SK-N-SH (cell line): ENCODE measurements at regions of chr2 and their contacts with region 1.

Region 1: GRCh38 chr2:207473049-207473930 is 56.5 kb upstream of the CREB1 start:
- DNase-seq: peak; percentile 51
- H3K4me3 ChIP-seq: peak overlapping the region in 1 of 2 experiments; percentile 10; a peak in 1 of 4 replicates
- H3K27ac ChIP-seq: peak overlapping the region; percentile 50 to 93; a peak in 3 of 4 replicates
- H3K4me1 ChIP-seq: peaks cover 13 to 52% of the 10 kb centered on the region in 2 experiments; a peak in 3 of 4 replicates
- H3K27me3 ChIP-seq: no peaks in the 10 kb centered on the region
- CTCF ChIP-seq: peak; percentile 89
- EP300 ChIP-seq: peak in 1 of 2 experiments; percentile 73; a peak in 1 of 4 replicates
- RAD21 ChIP-seq: peak; percentile 100

Region 2: DNA sequence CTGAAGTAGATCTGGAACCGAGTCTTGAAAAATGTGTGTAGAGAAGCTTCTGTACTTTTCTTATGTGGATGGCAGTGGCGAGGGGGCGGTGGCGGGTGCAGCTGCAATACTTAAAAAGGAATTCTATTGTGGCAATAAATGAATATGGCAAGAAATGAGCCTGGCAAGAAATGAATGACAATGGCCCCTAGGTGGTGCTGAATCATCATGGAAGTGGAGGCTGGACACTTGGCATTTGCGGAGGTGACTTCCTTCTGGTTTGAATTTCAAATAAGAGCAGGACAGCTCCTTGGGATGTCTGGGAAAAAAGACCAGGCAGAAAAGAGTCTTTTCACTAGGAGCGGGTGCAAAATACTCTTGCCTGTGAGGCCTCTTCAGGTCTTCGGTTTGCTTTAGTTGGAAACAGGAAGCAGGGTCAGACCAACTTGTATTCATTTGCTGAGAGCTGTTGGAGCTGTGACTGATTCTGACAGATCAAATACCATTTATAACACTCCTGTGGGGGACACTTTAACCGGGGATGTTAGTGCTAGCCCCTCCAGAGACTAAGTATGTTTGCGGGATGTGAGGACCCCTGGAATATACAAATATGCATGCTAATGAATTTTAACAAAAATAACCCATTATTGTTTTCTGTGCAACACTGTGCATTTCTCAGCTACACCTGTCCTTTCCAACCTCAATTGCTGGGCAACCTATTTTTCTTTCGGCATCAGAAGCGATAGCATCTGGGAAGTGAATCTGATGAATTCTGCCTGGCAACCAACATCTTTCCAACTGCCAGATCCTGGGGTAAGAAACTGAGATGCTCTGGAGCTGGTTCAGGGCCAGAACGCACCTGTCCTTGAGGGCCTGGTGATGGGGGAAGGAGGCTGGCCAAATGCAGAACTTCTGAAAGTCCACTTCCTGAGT is 672.5 kb before region 1 on chr2:
- CTCF ChIA-PET with region 1: interaction called, 111 read pairs
- POLR2A ChIA-PET with region 1: interaction called, 4 read pairs
- DNase-seq: peak; percentile 52
- H3K4me3 ChIP-seq: no peak overlapping the region; a peak in 1 of 4 replicates
- H3K27ac ChIP-seq: peak overlapping the region in 1 of 2 experiments; percentile 28; a peak in 1 of 4 replicates
- H3K4me1 ChIP-seq: peaks cover 0 to 27% of the 10 kb centered on the region in 2 experiments; a peak in 1 of 4 replicates
- H3K27me3 ChIP-seq: no peaks in the 10 kb centered on the region
- CTCF ChIP-seq: peak; percentile 78
- EP300 ChIP-seq: no peak
- RAD21 ChIP-seq: peak; percentile 95

Region 3: DNA sequence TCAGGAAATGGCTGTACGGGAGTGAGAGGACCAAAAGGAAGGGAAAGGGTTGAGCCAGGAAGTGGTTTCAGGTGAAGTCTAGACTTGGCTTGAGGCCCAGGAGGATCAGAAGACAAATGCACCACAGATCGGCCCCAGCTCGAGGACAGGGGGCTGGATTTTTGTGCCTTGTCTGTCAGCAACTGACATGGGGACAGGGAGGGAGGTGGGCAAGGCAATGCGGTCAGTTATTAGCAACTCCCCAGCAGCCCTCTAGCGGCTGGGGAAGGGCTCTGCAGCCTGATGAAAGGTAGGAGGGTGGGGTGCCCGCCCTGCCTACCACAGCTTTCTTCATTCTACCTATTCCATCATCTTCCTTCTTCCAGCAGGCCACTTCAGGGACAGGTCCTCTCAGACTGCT is 484.0 kb before region 1 on chr2:
- CTCF ChIA-PET with region 1: interaction called, 127 read pairs
- POLR2A ChIA-PET with region 1: no interaction called
- DNase-seq: peak; percentile 37
- H3K4me3 ChIP-seq: no peak overlapping the region
- H3K27ac ChIP-seq: peak overlapping the region in 1 of 2 experiments; percentile 92; a peak in 2 of 4 replicates
- H3K4me1 ChIP-seq: peaks cover 0 to 17% of the 10 kb centered on the region in 2 experiments; a peak in 2 of 4 replicates
- H3K27me3 ChIP-seq: no peaks in the 10 kb centered on the region
- CTCF ChIP-seq: peak; percentile 59
- EP300 ChIP-seq: no peak
- RAD21 ChIP-seq: peak; percentile 48

Region 4: GRCh38 chr2:207107551-207107950 is 365.7 kb before region 1 on chr2:
- CTCF ChIA-PET with region 1: interaction called, 23 read pairs
- POLR2A ChIA-PET with region 1: no interaction called
- DNase-seq: peak; percentile 55
- H3K4me3 ChIP-seq: no peak overlapping the region
- H3K27ac ChIP-seq: peak overlapping the region in 1 of 2 experiments; percentile 87; a peak in 2 of 4 replicates
- H3K4me1 ChIP-seq: peaks cover 0 to 47% of the 10 kb centered on the region in 2 experiments; a peak in 2 of 4 replicates
- H3K27me3 ChIP-seq: no peaks in the 10 kb centered on the region
- CTCF ChIP-seq: no peak
- EP300 ChIP-seq: no peak
- RAD21 ChIP-seq: peak; percentile 12; the same call in 1 of the 2 replicates

Region 5: DNA sequence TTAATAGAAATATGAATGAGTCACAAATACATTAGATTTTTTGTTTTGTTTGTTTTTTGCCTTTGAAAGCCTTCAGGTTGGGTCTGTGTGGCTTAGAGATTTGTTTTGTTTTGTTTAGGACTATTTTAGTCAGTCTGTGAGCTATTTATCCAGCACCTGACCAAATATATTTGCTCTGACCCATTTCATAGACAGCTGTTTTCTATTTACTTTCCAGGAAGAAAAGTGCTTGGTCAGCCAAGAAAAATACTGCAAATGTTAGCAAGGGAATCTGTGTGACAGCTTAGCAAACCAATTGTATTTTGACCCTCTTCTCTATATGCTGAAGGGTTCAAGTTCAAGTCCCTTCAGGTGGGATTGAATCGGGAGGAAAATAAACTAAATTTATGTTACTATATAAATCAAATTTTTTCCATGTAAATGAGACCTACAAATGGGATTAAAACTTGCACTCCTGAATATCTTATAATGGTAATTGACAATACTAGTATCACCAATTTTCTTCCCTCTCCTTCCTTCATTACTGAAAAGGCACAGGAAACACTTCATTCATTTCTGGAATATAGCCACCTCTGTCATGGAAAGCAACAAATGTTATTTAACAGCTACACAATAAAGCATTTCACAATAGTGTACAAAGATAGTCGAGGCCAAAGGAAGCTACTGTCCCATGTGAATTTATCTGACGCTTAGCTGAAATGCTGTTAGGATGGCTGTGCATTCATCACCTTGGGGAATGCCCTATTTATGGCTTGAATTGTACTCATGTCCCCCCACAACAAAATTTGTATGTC is 284.5 kb before region 1 on chr2:
- CTCF ChIA-PET with region 1: interaction called, 10 read pairs
- POLR2A ChIA-PET with region 1: no interaction called
- DNase-seq: no peak
- H3K4me3 ChIP-seq: no peak overlapping the region
- H3K27ac ChIP-seq: peak overlapping the region; percentile 51 to 52; a peak in 3 of 4 replicates
- H3K4me1 ChIP-seq: peaks cover 12 to 14% of the 10 kb centered on the region in 2 experiments; a peak in 3 of 4 replicates
- H3K27me3 ChIP-seq: no peaks in the 10 kb centered on the region
- CTCF ChIP-seq: no peak
- EP300 ChIP-seq: peak in 1 of 2 experiments; percentile 38; a peak in 1 of 4 replicates
- RAD21 ChIP-seq: no peak

Region 6: GRCh38 chr2:207219676-207220501 is 253.4 kb before region 1 on chr2:
- CTCF ChIA-PET with region 1: no interaction called
- POLR2A ChIA-PET with region 1: no interaction called
- DNase-seq: no peak
- H3K4me3 ChIP-seq: no peak overlapping the region
- H3K27ac ChIP-seq: peak overlapping the region; percentile 34 to 48; a peak in 3 of 4 replicates
- H3K4me1 ChIP-seq: peaks cover 9 to 21% of the 10 kb centered on the region in 2 experiments
- H3K27me3 ChIP-seq: no peaks in the 10 kb centered on the region
- CTCF ChIP-seq: no peak
- EP300 ChIP-seq: no peak
- RAD21 ChIP-seq: no peak

Region 7: GRCh38 chr2:207437524-207438143 is 35.7 kb before region 1 on chr2:
- CTCF ChIA-PET with region 1: interaction called, 15 read pairs
- POLR2A ChIA-PET with region 1: interaction called, 6 read pairs
- DNase-seq: peak; percentile 47
- H3K4me3 ChIP-seq: no peak overlapping the region
- H3K27ac ChIP-seq: peak overlapping the region in 1 of 2 experiments; percentile 90; a peak in 2 of 4 replicates
- H3K4me1 ChIP-seq: peaks cover 0 to 26% of the 10 kb centered on the region in 2 experiments; a peak in 2 of 4 replicates
- H3K27me3 ChIP-seq: no peaks in the 10 kb centered on the region
- CTCF ChIP-seq: no peak
- EP300 ChIP-seq: peak in 1 of 2 experiments; percentile 24; a peak in 1 of 4 replicates
- RAD21 ChIP-seq: peak; percentile 1; the same call in 1 of the 2 replicates